ENCODE measurements at regions of chr3 and their contacts with region 1.

Region 1: DNA sequence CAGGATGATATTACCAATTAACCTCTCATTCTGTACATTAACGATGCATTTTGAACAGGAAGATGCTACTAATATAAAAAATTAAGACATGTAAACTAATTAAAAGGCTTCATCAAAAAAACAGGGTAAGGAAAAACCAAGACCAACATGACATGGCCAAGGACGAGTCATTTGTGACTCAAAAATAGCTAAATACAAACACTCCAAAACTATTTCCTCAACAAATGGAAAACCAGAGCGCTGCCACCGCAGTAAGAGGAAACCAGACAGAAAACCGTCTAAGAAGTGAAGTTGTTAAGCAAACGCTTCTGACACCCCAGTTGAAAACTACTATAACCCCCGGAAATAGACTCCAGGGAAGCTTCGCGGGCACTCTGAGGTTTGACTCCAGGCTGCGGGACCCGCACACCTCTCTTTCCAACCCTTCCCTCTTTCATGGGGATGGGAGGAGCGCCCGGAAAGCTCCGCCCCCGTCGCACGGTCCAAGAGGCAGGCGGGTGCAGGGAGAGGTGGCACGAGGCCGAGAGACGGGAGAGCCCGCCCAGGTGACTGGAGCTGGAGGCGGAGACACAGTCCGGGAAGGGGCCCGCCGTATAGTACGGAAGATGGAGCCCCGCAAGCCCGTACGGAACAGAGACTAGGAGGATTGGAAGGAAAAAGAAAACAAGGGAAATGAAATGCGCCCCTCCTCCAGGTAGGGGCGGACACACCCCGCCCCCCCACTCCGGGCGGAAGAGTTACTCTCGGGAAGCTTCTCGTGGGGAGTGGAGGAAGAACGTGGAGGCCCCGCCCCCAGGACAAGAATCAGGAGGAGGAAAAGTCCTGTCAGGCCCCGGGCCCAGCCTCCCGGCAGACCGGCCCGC is 708 bp downstream of the DCAF1 start:
- DNase-seq: peak; percentile 89
- H3K4me3 Mint-ChIP-seq: peak overlapping the region; percentile 91
- H3K27ac Mint-ChIP-seq: peak overlapping the region; percentile 94
- H3K4me1 Mint-ChIP-seq: peaks cover 36% of the 10 kb centered on the region
- H3K27me3 Mint-ChIP-seq: no peaks in the 10 kb centered on the region

Region 2: DNA sequence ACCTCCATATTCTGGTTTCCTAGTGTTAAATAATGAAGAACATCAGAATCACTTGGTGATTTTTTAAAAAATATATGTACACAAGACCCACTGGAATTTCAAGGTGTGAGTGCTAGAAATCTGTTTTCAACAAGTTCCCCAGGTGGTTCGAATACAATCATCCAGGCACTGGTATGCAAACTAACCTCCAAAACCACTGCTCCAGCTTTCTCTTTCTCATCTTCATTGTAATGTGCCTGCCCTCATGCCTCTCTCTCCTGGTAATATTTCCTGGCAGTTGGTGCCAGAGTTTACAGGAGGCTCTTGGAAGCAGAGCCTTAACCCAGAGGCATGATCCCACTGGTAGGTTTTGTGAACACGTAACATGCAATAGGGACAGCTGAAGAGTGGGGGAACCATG is 277.1 kb before region 1 on chr3:
- CTCF ChIA-PET with region 1: no interaction called
- POLR2A ChIA-PET with region 1: no interaction called
- DNase-seq: no peak
- H3K4me3 Mint-ChIP-seq: no peak overlapping the region
- H3K27ac Mint-ChIP-seq: no peak overlapping the region
- H3K4me1 Mint-ChIP-seq: peaks cover 5% of the 10 kb centered on the region
- H3K27me3 Mint-ChIP-seq: no peaks in the 10 kb centered on the region

Region 3: DNA sequence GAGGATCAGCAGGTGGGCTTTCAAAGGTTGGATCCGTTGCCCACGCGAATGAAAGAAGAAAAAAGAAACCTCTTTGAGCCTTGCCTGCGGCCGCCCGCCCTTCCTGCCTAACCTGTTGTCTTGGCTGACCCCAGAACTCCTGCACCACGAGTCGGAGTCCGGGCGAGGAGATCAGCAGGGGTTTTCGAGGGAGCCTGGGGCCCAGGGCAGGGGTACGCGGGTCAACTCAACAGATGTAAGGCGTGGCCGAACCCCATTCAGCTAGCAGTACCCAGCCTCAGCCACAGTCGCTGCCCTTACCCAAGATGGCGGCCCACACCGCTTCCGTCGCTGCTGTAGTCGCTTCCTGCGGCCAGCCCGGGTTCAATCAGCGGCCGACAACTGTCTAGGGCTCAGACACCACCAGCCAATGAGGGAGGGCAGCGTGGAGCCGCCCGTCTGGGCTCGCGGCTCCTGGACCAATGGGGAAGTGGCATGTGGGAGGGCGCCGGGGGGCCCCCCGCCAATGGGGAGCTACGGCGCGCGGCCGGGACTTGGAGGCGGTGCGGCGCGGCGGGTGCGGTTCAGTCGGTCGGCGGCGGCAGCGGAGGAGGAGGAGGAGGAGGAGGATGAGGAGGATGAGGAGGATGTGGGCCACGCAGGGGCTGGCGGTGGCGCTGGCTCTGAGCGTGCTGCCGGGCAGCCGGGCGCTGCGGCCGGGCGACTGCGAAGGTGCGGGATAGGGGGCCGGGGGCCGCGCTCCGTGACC is 114.2 kb before region 1 on chr3 and contains the start of gene MANF:
- CTCF ChIA-PET with region 1: interaction called, 15 read pairs
- POLR2A ChIA-PET with region 1: interaction called, 20 read pairs
- DNase-seq: peak; percentile 99
- H3K4me3 Mint-ChIP-seq: peak within 1 kb of the TSS; percentile 98
- H3K27ac Mint-ChIP-seq: peak within 1 kb of the TSS; percentile 95
- H3K4me1 Mint-ChIP-seq: peaks cover 51% of the 10 kb centered on the region
- H3K27me3 Mint-ChIP-seq: no peaks in the 10 kb centered on the region
- total RNA-seq, gene MANF: 143 to 149 TPM

Region 4: DNA sequence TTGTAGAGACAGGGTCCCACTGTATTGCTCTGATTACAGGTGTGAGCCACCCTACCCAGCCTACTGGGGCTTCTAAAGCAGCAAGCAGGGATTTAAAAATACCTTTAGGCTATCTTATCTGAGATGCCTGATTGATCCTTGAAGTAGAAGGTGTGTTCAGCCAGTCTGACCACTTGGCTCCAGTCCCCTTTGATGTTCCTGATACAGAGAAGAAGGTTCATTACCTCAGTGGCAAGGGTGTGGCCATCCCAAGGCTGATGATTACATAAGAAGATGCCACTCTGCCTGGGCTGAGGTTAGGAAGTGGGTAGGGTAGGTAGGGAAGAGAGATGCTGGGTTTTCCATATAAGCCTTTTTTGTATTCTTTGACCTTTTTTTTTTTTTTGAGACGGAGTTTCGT is 11.9 kb after region 1 on chr3:
- CTCF ChIA-PET with region 1: interaction called, 34 read pairs
- POLR2A ChIA-PET with region 1: interaction called, 9 read pairs
- DNase-seq: no peak
- H3K4me3 Mint-ChIP-seq: no peak overlapping the region
- H3K27ac Mint-ChIP-seq: no peak overlapping the region
- H3K4me1 Mint-ChIP-seq: peaks cover 24% of the 10 kb centered on the region
- H3K27me3 Mint-ChIP-seq: no peaks in the 10 kb centered on the region

Region 5: DNA sequence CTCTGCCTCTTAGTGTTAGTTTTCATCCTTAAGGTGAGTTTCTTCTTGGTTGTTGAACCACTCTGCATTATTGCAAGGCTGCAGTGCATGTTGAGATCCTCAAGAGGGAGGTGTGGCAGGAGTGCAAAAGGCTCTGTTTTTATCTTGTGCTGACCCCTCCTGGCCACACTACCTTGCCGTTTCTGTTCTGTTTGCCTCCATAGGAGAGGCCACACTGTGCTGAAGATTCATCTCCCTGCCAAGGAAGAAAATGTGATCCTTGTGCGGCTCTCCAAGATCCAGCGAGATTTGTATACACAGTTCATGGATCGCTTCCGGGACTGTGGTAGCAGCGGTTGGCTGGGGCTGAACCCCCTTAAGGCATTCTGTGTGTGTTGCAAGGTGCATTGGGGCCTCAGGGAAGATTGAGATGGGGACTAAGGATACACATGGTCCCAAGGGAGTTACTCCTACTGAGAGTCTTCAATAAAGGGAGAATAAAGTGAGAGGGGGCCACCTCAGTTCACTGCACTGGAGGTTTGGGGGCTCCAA is 138.9 kb after region 1 on chr3:
- CTCF ChIA-PET with region 1: interaction called, 26 read pairs
- POLR2A ChIA-PET with region 1: no interaction called
- DNase-seq: peak; percentile 46
- H3K4me3 Mint-ChIP-seq: no peak overlapping the region
- H3K27ac Mint-ChIP-seq: no peak overlapping the region
- H3K4me1 Mint-ChIP-seq: no peaks in the 10 kb centered on the region
- H3K27me3 Mint-ChIP-seq: no peaks in the 10 kb centered on the region

Region 6: GRCh38 chr3:51682079-51682478 is 183.0 kb after region 1 on chr3:
- CTCF ChIA-PET with region 1: interaction called, 175 read pairs
- POLR2A ChIA-PET with region 1: interaction called, 59 read pairs
- DNase-seq: peak; percentile 86
- H3K4me3 Mint-ChIP-seq: peak overlapping the region; percentile 66
- H3K27ac Mint-ChIP-seq: peak overlapping the region; percentile 84
- H3K4me1 Mint-ChIP-seq: peaks cover 100% of the 10 kb centered on the region
- H3K27me3 Mint-ChIP-seq: no peaks in the 10 kb centered on the region

Region 7: DNA sequence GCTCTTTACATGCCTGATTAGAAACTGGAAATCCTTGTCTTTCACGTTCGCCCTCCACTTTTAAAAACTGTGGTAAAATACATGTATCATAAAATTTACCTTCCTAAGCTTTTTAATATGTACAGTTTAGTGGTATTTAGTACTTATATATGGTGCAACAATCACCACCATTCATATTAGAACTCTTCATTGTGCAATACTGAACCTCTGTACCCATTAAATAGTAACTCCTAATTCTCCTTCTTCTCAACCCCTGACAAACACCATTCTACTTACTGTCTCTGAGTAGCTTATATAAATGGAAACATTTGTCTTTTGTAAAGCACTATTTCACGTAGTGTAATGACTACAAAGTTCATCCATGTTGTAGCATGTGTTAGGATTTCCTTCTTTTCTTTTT is 235.9 kb after region 1 on chr3:
- CTCF ChIA-PET with region 1: no interaction called
- POLR2A ChIA-PET with region 1: no interaction called
- DNase-seq: no peak
- H3K4me3 Mint-ChIP-seq: no peak overlapping the region
- H3K27ac Mint-ChIP-seq: peak overlapping the region; percentile 16
- H3K4me1 Mint-ChIP-seq: peaks cover 23% of the 10 kb centered on the region
- H3K27me3 Mint-ChIP-seq: peaks cover 27% of the 10 kb centered on the region

Region 8: GRCh38 chr3:51799879-51800749 is 301.0 kb after region 1 on chr3:
- CTCF ChIA-PET with region 1: interaction called, 53 read pairs
- POLR2A ChIA-PET with region 1: interaction called, 7 read pairs
- DNase-seq: no peak
- H3K4me3 Mint-ChIP-seq: no peak overlapping the region
- H3K27ac Mint-ChIP-seq: no peak overlapping the region
- H3K4me1 Mint-ChIP-seq: peaks cover 60% of the 10 kb centered on the region
- H3K27me3 Mint-ChIP-seq: peaks cover 14% of the 10 kb centered on the region